BJ (cell line): ENCODE measurements at regions of chr14 and their contacts with region 1.

Region 1: GRCh38 chr14:22653012-22653621 is 9.0 kb upstream of the OR6J1 start:
- DNase-seq: peak; percentile 26
- H3K4me3 ChIP-seq: no peak overlapping the region
- H3K27me3 ChIP-seq: no peaks in the 10 kb centered on the region
- CTCF ChIP-seq: peak; percentile 97

Region 2: GRCh38 chr14:22589096-22589839 is 63.8 kb before region 1 on chr14 and contains the start of gene DAD1:
- CTCF ChIA-PET with region 1: interaction called, 24 read pairs
- POLR2A ChIA-PET with region 1: interaction called, 3 read pairs
- DNase-seq: peak; percentile 99
- H3K4me3 ChIP-seq: peak within 1 kb of the TSS; percentile 63
- H3K27me3 ChIP-seq: peaks cover 6% of the 10 kb centered on the region
- CTCF ChIP-seq: no peak
- polyA plus RNA-seq, gene DAD1: 383 and 576 TPM in 2 replicates

Region 3: GRCh38 chr14:22598099-22598899 is 54.8 kb before region 1 on chr14 and contains the start of gene ABHD4:
- CTCF ChIA-PET with region 1: interaction called, 26 read pairs
- POLR2A ChIA-PET with region 1: no interaction called
- DNase-seq: no peak
- H3K4me3 ChIP-seq: peak within 1 kb of the TSS; percentile 95
- H3K27me3 ChIP-seq: peaks cover 2% of the 10 kb centered on the region
- CTCF ChIP-seq: no peak
- polyA plus RNA-seq, gene ABHD4: 77.2 and 115 TPM in 2 replicates

Region 4: GRCh38 chr14:22689186-22689585 is 36.1 kb after region 1 on chr14:
- CTCF ChIA-PET with region 1: interaction called, 12 read pairs
- POLR2A ChIA-PET with region 1: no interaction called
- DNase-seq: peak; percentile 58
- H3K4me3 ChIP-seq: no peak overlapping the region
- H3K27me3 ChIP-seq: no peaks in the 10 kb centered on the region; the same call in none of the 2 replicates
- CTCF ChIP-seq: no peak

Region 5: GRCh38 chr14:22822571-22823098 is 169.5 kb after region 1 on chr14:
- CTCF ChIA-PET with region 1: interaction called, 10 read pairs
- POLR2A ChIA-PET with region 1: no interaction called
- DNase-seq: peak; percentile 54
- H3K4me3 ChIP-seq: peak overlapping the region; percentile 28
- H3K27me3 ChIP-seq: no peaks in the 10 kb centered on the region
- CTCF ChIP-seq: peak; percentile 90